ENCODE measurements at regions of chr22 and their contacts with region 1.

Region 1: GRCh38 chr22:50620593-50621355 is 7.2 kb downstream of the ARSA start:
- DNase-seq: peak; percentile 94
- ATAC-seq: peak; percentile 81
- H3K4me3 ChIP-seq: peak overlapping the region; percentile 46 to 79 (median 59)
- H3K4me3 Mint-ChIP-seq: peak overlapping the region; percentile 95
- H3K27ac ChIP-seq: peak overlapping the region; percentile 91 to 95
- H3K27ac Mint-ChIP-seq: peak overlapping the region; percentile 97
- H3K4me1 ChIP-seq: peaks cover 24 to 35% of the 10 kb centered on the region in 2 donors
- H3K4me1 Mint-ChIP-seq: peaks cover 31% of the 10 kb centered on the region
- H3K27me3 ChIP-seq: no peaks in the 10 kb centered on the region
- H3K27me3 Mint-ChIP-seq: no peaks in the 10 kb centered on the region
- CTCF ChIP-seq: peak; percentile 24

Region 2: DNA sequence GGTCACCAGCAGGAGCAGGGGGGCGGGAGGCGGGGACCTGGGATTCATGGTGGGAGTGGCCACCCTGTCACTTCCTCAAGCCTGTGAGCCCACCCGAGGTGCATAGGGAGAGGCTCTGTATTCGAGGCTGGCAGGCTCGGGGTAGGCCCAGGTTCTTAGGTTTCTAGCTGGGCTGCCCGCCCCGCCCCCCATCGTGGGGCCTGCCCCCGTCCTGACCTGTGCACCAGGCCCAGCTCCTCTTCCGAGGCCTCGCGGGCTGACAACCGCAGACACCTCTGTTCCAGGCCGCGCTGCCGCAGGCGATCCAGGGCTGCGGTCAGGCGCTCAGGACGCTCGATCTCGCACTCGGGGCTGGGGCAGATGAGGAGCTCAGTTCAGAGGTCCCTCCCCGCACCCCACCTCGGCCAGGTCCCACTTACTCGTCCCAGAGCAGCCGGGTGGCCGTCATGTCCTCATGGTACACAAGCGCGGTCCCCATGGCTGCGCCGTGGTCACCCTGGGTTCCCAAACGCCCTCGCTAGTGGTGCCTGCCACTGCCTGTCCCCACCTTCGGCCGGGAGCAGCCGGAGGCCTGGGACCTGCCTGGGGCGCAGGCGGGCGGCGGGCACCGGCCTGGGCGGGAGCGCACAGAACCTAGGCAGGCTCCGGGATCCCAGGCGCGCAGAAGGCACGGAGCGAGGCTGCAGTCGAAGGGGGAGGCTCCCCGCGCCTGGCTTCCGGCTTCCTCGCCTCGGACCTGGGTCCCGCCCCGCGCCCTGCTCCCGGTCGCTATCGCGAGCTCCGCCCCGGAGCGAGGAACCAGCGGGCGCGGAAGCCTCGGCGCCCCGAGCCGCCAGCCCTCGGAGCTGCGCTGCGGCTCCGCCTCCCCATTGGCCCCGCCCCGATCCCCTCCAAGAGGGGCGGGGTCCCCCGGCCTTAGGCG is 370.0 kb before region 1 on chr22 and contains the start of gene HDAC10:
- CTCF ChIA-PET with region 1: interaction called, 6 read pairs
- POLR2A ChIA-PET with region 1: interaction called, 12 read pairs
- intact Hi-C with region 1: no loop called
- DNase-seq: peak; percentile 85
- ATAC-seq: peak; percentile 84
- H3K4me3 ChIP-seq: peak within 1 kb of the TSS; percentile 56 to 81 (median 79)
- H3K4me3 Mint-ChIP-seq: peak within 1 kb of the TSS; percentile 86
- H3K27ac ChIP-seq: peak within 1 kb of the TSS; percentile 41 to 49
- H3K27ac Mint-ChIP-seq: peak within 1 kb of the TSS; percentile 76
- H3K4me1 ChIP-seq: peaks cover 15 to 44% of the 10 kb centered on the region in 2 donors
- H3K4me1 Mint-ChIP-seq: peaks cover 24% of the 10 kb centered on the region
- H3K27me3 ChIP-seq: no peaks in the 10 kb centered on the region
- H3K27me3 Mint-ChIP-seq: no peaks in the 10 kb centered on the region
- CTCF ChIP-seq: no peak
- total RNA-seq, gene HDAC10: 120 and 136 TPM in 2 replicates

Region 3: DNA sequence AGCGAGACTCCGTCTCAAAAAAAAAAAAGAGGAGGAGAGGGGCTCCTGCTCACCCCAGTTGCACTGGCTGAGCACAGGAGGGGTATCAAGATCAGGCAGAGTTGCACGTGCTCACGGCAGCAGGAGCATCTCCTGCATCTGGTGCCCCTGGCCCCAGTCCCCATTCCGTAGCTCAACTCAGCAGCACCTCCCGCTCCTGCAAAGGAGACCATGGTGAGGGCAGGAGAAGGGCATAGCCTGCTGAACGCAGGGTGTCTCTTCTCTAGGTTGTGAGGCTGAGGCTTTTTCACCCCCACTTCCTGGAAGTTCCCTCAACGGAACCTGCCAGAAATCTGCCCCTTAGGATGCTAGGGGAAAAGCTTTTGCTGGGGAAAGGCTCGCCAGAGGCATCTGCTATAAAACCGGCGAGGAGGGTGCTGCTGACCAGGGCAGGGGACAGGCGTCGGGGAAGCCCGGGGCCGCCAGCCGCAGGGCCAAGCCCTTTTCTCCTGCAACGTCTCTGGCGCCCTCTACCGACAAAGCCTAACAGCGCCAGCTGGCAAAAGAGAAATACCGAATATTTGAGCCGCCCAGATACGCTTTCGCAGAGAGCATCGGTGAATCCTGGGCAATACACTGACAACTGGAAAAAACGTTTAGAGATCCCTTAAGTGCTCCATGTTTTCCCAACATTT is 278.7 kb before region 1 on chr22:
- CTCF ChIA-PET with region 1: interaction called, 8 read pairs
- POLR2A ChIA-PET with region 1: no interaction called
- intact Hi-C with region 1: loop called (anchors 2 kb)
- DNase-seq: peak; percentile 91
- ATAC-seq: peak; percentile 52
- H3K4me3 ChIP-seq: peak overlapping the region; percentile 33 to 78 (median 74)
- H3K4me3 Mint-ChIP-seq: peak overlapping the region; percentile 90
- H3K27ac ChIP-seq: peak overlapping the region; percentile 51 to 81
- H3K27ac Mint-ChIP-seq: peak overlapping the region; percentile 82
- H3K4me1 ChIP-seq: peaks cover 16 to 21% of the 10 kb centered on the region in 2 donors
- H3K4me1 Mint-ChIP-seq: peaks cover 10% of the 10 kb centered on the region
- H3K27me3 ChIP-seq: no peaks in the 10 kb centered on the region
- H3K27me3 Mint-ChIP-seq: no peaks in the 10 kb centered on the region
- CTCF ChIP-seq: peak; percentile 94

Region 4: DNA sequence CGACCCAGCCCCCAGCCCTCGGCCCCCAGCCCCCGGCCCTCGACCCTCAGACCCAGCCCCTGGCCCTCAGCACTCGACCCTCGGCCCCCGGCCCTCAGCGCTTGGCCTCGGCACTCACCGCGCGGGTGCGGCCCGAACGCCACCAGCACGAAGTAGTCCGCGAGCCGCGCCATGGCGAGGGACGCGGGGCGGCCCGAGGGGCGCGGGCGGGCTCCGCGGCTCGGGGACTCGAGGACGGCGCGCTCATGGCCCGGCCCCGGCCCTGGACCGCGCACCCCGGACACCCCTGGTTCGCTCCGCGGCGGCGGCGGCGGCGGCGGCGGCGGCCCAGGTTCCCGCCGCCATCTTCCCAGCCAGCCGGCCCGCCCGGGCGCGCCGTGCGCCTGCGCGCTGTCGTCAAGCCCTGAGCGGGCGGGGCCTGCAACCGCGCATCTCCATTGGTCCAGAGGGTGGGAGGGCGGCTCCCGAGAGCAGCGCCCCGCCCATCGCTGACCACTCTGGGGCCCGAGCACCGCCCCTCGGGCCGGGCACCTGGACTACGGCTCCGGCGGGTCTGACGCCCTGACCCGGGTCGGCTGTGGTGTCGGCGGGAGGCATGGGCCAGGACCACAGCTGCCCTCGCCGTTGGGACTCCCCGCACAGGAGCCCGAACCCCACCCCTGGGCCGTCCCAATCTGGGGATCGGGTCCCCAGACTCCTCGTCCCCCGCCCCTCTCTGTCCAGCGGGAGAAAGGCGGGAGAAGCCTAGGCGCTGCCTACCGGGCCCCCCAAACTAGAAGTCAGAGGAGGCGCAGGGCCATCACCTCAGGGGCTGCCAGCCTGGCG is 145.9 kb before region 1 on chr22 and contains the start of gene SBF1:
- CTCF ChIA-PET with region 1: interaction called, 8 read pairs
- POLR2A ChIA-PET with region 1: no interaction called
- intact Hi-C with region 1: loop called (anchors 1 kb)
- DNase-seq: peak; percentile 93
- ATAC-seq: peak; percentile 78
- H3K4me3 ChIP-seq: peak within 1 kb of the TSS; percentile 51 to 81 (median 68)
- H3K4me3 Mint-ChIP-seq: peak within 1 kb of the TSS; percentile 89
- H3K27ac ChIP-seq: peak within 1 kb of the TSS; percentile 20 to 90
- H3K27ac Mint-ChIP-seq: peak within 1 kb of the TSS; percentile 92
- H3K4me1 ChIP-seq: peaks cover 46 to 51% of the 10 kb centered on the region in 2 donors
- H3K4me1 Mint-ChIP-seq: peaks cover 48% of the 10 kb centered on the region
- H3K27me3 ChIP-seq: no peaks in the 10 kb centered on the region
- H3K27me3 Mint-ChIP-seq: peaks cover 2% of the 10 kb centered on the region
- CTCF ChIP-seq: no peak
- total RNA-seq, gene SBF1: 254 TPM in 2 replicates

Region 5: DNA sequence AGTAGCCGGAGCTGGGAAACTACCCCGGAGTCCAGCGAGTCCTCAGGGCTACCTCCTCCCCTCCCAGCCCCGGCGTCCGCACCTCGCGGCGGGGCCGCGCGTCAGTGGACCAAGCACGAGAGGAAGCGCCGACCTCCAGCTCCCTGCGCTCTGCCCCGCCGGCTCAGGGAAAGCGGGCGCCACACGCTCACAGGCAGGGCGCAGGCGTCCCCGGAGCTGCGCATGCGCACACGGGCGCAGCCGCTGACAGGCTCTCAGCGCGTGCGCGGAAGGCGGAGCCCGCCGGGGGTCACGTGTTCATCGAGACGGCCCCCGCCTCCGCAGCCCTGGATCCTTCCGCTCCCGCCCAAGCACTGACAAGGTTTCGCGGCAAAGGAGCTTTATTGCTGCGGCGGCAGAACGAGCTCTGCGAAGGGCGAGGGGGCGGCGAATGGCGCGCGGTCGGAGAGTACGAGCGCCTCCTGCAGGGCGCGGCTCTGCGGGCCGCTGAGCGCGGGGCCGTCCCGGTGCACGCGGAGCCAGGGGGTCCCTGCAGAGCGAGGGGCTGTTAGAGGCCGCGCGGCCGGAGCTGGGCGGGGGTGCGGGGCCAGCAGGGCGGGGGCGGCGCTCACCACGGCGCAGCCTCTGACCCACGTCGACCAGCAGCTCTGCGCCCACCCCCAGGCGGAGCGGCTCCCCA is 95.2 kb before region 1 on chr22 and contains the start of gene SCO2:
- CTCF ChIA-PET with region 1: interaction called, 48 read pairs
- POLR2A ChIA-PET with region 1: interaction called, 20 read pairs
- intact Hi-C with region 1: loop called (anchors 1 kb)
- DNase-seq: peak; percentile 98
- ATAC-seq: peak; percentile 54
- H3K4me3 ChIP-seq: peak within 1 kb of the TSS; percentile 4 to 82 (median 69)
- H3K4me3 Mint-ChIP-seq: peak within 1 kb of the TSS; percentile 90
- H3K27ac ChIP-seq: peak within 1 kb of the TSS; percentile 83 to 90
- H3K27ac Mint-ChIP-seq: peak within 1 kb of the TSS; percentile 91
- H3K4me1 ChIP-seq: peaks cover 16 to 52% of the 10 kb centered on the region in 2 donors
- H3K4me1 Mint-ChIP-seq: peaks cover 34% of the 10 kb centered on the region
- H3K27me3 ChIP-seq: no peaks in the 10 kb centered on the region
- H3K27me3 Mint-ChIP-seq: no peaks in the 10 kb centered on the region
- CTCF ChIP-seq: no peak
- total RNA-seq, gene SCO2: 1.1 TPM in 2 replicates

Region 6: DNA sequence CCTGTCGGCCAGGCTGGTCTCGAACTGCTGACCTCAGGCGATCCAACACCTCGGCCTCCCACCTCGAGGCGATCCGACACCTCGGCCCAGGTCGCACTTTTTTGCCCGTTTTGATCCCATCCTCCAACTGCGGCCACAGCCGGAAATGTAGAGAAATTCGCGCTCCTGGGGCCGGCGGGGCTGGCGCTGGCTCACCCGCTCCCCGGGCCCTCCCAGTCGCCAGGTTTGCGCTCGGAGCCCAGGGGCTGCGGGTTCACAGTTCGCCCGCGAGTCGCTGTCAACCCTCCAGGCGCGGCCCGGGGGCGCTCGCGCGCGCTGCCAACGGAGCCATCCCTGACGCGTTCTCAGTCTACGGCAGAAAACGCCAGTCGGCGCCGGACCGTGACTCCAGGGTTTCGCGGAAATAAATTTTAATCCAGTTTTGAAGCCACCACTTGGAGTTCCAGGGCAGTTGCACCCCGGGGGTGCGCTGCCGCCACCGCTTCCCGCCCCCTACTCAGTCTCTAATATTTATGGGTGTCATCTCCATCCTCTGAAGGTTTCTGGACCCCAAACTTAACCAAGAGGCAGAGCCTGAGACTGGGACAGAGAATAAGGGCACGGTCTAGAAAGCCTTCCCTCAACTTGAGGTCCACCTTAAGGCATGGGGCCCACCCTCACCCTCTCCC is 76.6 kb before region 1 on chr22:
- CTCF ChIA-PET with region 1: interaction called, 23 read pairs
- POLR2A ChIA-PET with region 1: interaction called, 7 read pairs
- intact Hi-C with region 1: loop called (anchors 2 kb)
- DNase-seq: peak; percentile 90
- ATAC-seq: peak; percentile 46
- H3K4me3 ChIP-seq: peak overlapping the region in 4 of 5 experiments; percentile 12 to 49 (median 33)
- H3K4me3 Mint-ChIP-seq: peak overlapping the region; percentile 45
- H3K27ac ChIP-seq: peak overlapping the region; percentile 72 to 75
- H3K27ac Mint-ChIP-seq: peak overlapping the region; percentile 90
- H3K4me1 ChIP-seq: peaks cover 42 to 63% of the 10 kb centered on the region in 2 donors
- H3K4me1 Mint-ChIP-seq: peaks cover 46% of the 10 kb centered on the region
- H3K27me3 ChIP-seq: no peaks in the 10 kb centered on the region
- H3K27me3 Mint-ChIP-seq: no peaks in the 10 kb centered on the region
- CTCF ChIP-seq: peak; percentile 79

Region 7: GRCh38 chr22:50595189-50595588 is 25.6 kb before region 1 on chr22:
- CTCF ChIA-PET with region 1: no interaction called
- POLR2A ChIA-PET with region 1: no interaction called
- intact Hi-C with region 1: no loop called
- DNase-seq: no peak
- ATAC-seq: no peak
- H3K4me3 ChIP-seq: no peak overlapping the region
- H3K4me3 Mint-ChIP-seq: no peak overlapping the region
- H3K27ac ChIP-seq: no peak overlapping the region
- H3K27ac Mint-ChIP-seq: no peak overlapping the region
- H3K4me1 ChIP-seq: peaks cover 4 to 6% of the 10 kb centered on the region in 2 donors
- H3K4me1 Mint-ChIP-seq: peaks cover 4% of the 10 kb centered on the region
- H3K27me3 ChIP-seq: peaks cover 0 to 21% (median 11%) of the 10 kb centered on the region in 4 experiments
- H3K27me3 Mint-ChIP-seq: peaks cover 11% of the 10 kb centered on the region
- CTCF ChIP-seq: no peak

Measured in B cell (primary cell).